Astrocyte of the cerebellum (primary cell): ENCODE measurements at regions of chr17 and their contacts with region 1.

Region 1: GRCh38 chr17:67406912-67407311 is 29.8 kb downstream of the PITPNC1 start:
- DNase-seq: no peak
- H3K4me3 ChIP-seq: no peak overlapping the region
- CTCF ChIP-seq: no peak

Region 2: GRCh38 chr17:67366193-67367157 is 40.4 kb before region 1 on chr17 and contains the start of gene PSMD12:
- in situ Hi-C with region 1: no loop called
- DNase-seq: peak; percentile 64
- H3K4me3 ChIP-seq: peak within 1 kb of the TSS; percentile 97
- CTCF ChIP-seq: no peak

Region 3: DNA sequence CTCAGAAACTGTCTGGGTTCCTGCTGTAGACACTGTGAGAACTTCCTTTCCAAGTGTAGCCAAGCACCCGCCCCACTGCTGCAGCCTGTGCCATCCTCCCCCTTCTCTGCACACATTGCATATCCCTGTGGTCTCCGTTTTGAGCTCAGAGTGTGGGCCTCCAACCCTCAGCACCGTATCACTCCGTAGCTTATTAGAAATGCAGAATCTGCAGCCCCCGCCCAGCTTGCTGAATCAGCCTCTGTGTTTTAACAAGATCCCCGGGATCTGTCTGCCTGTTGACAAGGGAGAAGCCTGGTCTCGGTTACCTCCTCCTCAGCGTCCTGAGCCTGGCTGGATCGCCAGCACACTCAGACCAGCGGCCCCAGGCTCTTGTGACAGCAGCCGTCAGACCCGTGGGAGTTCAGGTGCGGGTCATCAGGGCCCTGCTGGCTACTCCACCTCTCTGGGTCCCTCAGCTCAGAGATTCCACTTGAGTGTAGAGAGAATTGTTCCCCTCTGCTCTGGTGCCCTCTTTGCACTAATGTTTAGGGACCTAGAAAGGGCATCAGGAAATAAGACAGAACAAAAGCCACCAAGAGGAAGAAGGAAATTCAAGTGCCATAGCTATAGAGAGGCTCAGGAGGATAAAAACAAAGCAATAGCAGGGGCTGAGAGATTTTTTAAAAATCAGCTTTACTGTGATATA is 62.4 kb after region 1 on chr17:
- in situ Hi-C with region 1: no loop called
- DNase-seq: no peak
- H3K4me3 ChIP-seq: no peak overlapping the region
- CTCF ChIP-seq: no peak

Region 4: DNA sequence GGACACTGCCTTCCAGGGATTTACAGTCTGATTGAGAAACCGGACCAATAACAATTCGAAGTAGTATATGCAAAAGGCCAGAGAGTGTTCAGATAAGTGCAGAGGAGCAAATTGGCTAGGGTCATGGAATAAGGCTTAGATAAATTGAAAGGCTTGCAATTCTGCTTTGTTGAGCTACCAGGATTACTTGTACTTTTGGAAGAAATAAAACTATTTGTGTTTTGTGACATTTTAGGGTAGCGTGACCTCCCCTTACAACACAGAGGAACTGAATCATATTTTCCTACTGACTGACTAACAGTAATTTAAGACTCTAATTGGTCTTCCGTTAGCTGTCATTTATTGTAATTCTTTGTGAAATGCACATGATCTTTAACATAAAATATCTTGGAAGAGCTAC is 74.9 kb after region 1 on chr17:
- in situ Hi-C with region 1: loop called (anchors 5 kb)
- DNase-seq: no peak
- H3K4me3 ChIP-seq: no peak overlapping the region
- CTCF ChIP-seq: no peak

Region 5: DNA sequence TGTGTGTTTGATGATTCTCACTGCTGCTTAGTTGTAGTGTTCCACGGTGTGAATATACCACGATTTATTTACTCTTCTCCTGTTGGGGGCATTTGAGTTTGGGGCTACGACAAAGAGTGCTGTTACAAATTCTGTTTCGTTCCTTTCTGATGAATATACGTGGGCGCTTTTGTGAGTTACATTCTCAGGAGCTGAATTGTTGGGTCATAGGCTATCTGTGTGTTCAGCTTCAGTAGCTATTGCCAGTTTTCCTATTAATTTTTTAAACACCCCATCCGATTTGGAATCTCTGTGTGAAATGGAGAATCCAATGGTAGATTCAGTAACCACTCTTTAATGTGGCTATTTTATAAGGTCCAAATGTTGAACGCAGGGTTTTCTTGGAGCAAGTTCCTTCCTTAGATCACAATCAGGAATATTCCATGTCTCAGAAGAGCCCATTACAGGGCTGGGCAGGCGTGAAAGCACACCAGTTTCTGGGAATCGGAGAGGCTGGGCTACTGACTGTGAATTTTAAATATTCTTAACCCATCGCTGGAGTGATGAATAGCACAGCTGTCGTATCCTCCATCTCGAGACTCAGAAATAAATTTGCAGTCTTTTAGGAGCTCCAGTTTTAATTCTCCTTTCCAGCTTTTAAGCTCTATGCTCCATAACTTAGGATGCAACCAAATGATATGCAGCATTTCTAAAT is 86.1 kb after region 1 on chr17:
- in situ Hi-C with region 1: no loop called
- DNase-seq: no peak
- H3K4me3 ChIP-seq: no peak overlapping the region
- CTCF ChIP-seq: no peak